Dorsolateral prefrontal cortex (tissue), 120 donors: ENCODE measurements at regions of chr7 and their contacts with region 1.

Region 1: DNA sequence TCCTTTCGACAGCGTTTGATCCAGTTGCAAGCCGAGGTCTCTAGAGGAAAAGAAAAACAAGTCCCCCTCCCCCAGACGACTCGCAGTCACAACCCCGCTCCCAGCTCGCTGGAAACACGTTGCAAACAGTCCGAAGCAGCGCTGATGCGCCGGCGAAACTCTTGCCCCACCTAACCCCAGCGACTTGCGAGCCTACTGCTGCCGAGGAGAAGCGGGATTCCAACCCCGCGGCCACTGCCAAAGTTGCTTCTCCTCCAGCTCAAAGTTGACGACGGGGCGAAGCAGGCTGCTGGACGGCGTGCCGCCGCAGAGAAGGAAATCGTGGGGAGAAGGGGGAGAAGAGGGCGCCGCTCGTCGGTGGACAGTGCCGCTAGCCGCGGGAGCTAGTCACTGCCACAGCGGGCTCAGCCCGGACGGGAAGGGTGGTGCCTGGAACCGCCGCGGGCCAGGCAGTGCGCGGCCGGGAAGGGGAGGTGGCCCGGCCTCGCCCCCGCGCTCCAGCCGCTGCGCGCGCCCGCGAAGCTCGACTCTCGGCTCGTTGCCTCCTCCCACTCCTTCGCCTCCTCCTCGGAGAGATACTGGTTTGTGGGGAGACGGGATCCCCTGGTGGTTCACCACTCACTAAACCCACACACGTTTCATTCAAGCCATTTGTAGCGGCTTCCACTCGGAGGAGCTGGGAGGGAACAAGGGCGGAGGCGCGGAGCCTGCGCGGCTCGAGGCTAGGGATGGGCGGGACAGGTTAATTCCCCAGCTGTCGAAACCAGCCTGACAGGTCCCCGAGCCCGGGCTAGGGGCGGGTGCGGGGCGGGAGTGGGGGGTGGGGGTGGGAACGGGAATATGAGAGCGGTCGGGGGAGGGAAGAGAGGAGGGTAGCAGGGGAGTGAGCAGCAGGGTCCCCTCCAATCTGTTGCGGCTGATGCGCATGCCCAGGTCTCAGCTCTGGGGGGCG is at the start of gene GPR37:
- DNase-seq: peak; percentile 34 to 91 (median 88)
- H3K4me3 ChIP-seq: peak within 1 kb of the TSS; percentile 51 to 92 (median 75)
- H3K27ac ChIP-seq: peak within 1 kb of the TSS; percentile 69 to 99 (median 95)
- H3K27me3 ChIP-seq: peaks cover 0 to 13% (median 0%) of the 10 kb centered on the region in 45 donors
- CTCF ChIP-seq: peak in 51 of 56 donors; percentile 10 to 72 (median 51)
- total RNA-seq, gene GPR37: 19.1 to 393 (median 88.3) TPM

Region 2: DNA sequence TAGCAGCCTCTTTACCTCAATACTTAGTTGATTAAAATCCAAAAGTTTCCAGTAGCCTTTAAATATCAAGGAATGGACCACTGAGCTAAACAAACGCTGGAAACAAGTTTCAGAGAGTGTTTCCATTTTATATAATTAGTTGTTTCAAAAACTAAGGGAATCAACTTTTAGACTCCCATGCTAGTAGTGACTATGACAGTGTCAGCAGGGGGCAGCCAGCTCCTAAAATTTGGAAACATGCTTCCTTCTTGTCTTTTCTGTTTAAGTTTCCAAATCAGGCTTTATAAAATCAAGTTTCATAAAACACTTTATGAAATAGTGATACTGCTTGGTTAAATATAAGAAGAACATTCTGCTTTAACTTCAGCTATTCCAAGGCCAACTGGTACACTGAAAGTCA is 594.6 kb before region 1 on chr7:
- intact Hi-C with region 1: loop called (anchors 5 kb)
- DNase-seq: peak in 9 of 10 donors; percentile 31 to 77 (median 55)
- H3K4me3 ChIP-seq: no peak overlapping the region
- H3K27ac ChIP-seq: peak overlapping the region in 1 of 59 donors; percentile 22
- H3K27me3 ChIP-seq: no peaks in the 10 kb centered on the region
- CTCF ChIP-seq: peak in 55 of 56 donors; percentile 19 to 89 (median 64)

Region 3: DNA sequence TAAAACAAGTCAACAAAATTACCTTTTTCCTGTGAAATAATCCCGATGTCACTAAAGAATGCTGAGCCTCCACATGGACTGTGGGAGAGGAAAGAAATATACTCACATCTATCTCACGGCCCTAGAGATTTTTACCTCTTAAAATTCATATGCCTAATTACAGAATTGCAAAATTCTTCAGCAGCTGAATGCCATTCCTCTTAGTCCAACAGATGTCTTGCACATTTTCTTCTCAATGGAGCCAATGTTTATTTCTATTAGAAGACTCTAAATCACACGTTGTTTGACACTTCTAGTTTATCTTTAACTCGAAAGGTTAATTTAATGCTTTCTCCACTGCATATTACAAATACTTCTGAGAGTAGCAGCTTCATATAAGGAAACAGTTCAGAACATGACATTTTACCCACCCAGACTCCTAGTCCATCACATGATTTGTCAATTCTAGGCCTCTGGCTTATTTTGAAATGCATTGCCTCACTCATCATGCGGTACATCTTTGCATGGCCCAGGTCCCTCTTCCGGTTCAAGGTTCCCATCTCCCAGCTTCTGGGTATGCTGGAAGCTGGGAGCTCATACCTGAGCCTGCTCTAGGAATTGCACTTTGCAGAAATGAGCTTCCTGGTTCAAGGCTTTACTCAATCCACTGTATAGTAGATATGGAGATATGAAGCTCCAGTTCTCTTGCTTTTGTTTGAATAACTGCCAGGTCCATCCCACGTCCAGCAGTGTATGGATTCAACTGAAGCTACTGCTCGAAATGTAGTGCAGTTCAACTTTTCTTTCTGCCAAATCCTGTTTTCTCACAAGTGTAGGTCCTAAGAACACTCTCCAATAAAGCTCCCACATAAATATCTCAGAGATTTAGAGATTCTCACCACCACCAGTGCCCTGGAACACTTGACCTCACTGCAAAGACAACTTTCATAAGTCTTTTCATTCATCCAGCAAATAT is 306.3 kb before region 1 on chr7:
- intact Hi-C with region 1: loop called in 1 of 2 experiments (anchors 10 kb)
- DNase-seq: peak in 2 of 10 donors; percentile 33 to 44
- H3K4me3 ChIP-seq: no peak overlapping the region
- H3K27ac ChIP-seq: peak overlapping the region in 13 of 59 donors; percentile 7 to 49 (median 25)
- H3K27me3 ChIP-seq: no peaks in the 10 kb centered on the region
- CTCF ChIP-seq: no peak

Region 4: DNA sequence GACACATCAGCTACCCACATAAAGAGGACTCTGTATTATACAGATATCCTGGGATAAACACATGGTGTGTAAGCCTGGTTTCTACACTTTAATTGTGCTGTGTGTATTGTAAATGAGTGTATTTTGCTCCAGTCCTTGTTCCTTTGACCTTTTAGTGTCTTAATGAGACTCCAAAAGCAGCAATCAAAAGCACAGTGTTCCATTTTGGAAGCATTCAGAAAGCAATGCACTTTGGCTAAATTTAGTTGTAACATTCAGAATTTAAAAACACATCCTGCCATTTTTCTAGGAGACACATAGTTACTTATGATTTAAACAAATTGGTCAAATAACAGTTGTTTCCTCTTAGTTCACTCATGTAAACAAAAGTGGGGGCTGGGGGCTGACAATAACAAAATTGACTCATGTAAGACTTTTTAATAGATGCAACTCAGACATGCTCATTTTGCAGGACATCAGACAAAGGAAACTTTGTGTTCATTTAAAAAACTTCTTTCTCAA is 122.3 kb before region 1 on chr7:
- intact Hi-C with region 1: loop called (anchors 5 kb)
- DNase-seq: no peak
- H3K4me3 ChIP-seq: peak overlapping the region in 20 of 59 donors; percentile 1 to 40 (median 12)
- H3K27ac ChIP-seq: peak overlapping the region; percentile 2 to 94 (median 78)
- H3K27me3 ChIP-seq: no peaks in the 10 kb centered on the region
- CTCF ChIP-seq: peak in 1 of 56 donors; percentile 10

Region 5: GRCh38 chr7:124667312-124668153 is 98.1 kb before region 1 on chr7:
- intact Hi-C with region 1: loop called in 1 of 2 experiments (anchors 5 kb)
- DNase-seq: no peak
- H3K4me3 ChIP-seq: peak overlapping the region in 4 of 59 donors; percentile 1 to 21 (median 8)
- H3K27ac ChIP-seq: peak overlapping the region in 5 of 59 donors; percentile 8 to 47 (median 18)
- H3K27me3 ChIP-seq: no peaks in the 10 kb centered on the region
- CTCF ChIP-seq: no peak

Region 6: GRCh38 chr7:125020801-125021200 is 255.1 kb after region 1 on chr7:
- intact Hi-C with region 1: no loop called
- DNase-seq: no peak
- H3K4me3 ChIP-seq: no peak overlapping the region
- H3K27ac ChIP-seq: no peak overlapping the region
- H3K27me3 ChIP-seq: no peaks in the 10 kb centered on the region
- CTCF ChIP-seq: no peak